ENCODE measurements at regions of chr5 and their contacts with region 1.

Region 1: DNA sequence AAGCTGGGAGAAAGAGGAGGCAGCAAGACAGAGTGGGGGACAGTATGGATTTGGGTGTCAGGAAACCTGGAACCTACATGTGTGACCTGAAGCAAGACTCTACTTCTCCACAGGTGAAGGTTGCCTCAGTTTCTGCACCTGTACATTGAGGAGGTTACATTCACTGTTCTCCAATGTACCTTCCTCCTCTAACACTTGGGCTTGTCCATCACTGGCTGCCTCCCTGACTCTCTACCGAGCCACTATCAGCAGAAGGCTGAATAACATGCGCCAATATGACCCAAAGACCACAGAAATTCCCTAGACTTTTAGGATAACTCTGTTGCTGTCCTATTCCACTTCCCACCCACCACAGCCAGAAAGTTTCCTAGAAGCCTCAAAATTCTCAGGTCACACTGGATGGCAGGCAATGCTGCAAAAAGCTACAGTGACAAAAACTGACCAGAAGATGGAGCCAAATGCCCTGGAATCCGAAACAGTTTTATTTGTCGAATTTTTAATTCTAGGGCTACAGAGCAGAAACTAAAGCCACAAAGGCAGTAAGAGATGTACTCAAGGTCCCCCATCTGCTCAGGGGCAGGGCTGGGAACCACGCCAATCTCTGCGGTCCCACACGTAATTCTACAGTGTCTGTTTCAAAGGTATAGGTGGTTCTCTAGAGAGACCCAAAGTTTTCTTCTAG is 64.4 kb downstream of the FAM114A2 start:
- DNase-seq: no peak
- H3K4me3 Mint-ChIP-seq: no peak overlapping the region
- H3K27ac Mint-ChIP-seq: no peak overlapping the region
- H3K4me1 Mint-ChIP-seq: no peaks in the 10 kb centered on the region
- H3K27me3 Mint-ChIP-seq: peaks cover 15% of the 10 kb centered on the region

Region 2: GRCh38 chr5:154038707-154039457 is 64.6 kb after region 1 on chr5 and contains the starts of genes FAM114A2 and MFAP3:
- intact Hi-C with region 1: loop called (anchors 2 kb)
- DNase-seq: peak; percentile 88
- H3K4me3 Mint-ChIP-seq: peak within 1 kb of the TSS; percentile 98
- H3K27ac Mint-ChIP-seq: peak within 1 kb of the TSS; percentile 94
- H3K4me1 Mint-ChIP-seq: peaks cover 50% of the 10 kb centered on the region
- H3K27me3 Mint-ChIP-seq: no peaks in the 10 kb centered on the region
- total RNA-seq, gene FAM114A2: 28.3 and 28.7 TPM in 2 replicates
- total RNA-seq, gene MFAP3: 24.3 and 29.9 TPM in 2 replicates

Region 3: GRCh38 chr5:154179846-154180710 is 205.8 kb after region 1 on chr5:
- intact Hi-C with region 1: loop called (anchors 1 kb)
- DNase-seq: peak; percentile 25
- H3K4me3 Mint-ChIP-seq: no peak overlapping the region
- H3K27ac Mint-ChIP-seq: no peak overlapping the region
- H3K4me1 Mint-ChIP-seq: peaks cover 38% of the 10 kb centered on the region
- H3K27me3 Mint-ChIP-seq: peaks cover 8% of the 10 kb centered on the region

Region 4: DNA sequence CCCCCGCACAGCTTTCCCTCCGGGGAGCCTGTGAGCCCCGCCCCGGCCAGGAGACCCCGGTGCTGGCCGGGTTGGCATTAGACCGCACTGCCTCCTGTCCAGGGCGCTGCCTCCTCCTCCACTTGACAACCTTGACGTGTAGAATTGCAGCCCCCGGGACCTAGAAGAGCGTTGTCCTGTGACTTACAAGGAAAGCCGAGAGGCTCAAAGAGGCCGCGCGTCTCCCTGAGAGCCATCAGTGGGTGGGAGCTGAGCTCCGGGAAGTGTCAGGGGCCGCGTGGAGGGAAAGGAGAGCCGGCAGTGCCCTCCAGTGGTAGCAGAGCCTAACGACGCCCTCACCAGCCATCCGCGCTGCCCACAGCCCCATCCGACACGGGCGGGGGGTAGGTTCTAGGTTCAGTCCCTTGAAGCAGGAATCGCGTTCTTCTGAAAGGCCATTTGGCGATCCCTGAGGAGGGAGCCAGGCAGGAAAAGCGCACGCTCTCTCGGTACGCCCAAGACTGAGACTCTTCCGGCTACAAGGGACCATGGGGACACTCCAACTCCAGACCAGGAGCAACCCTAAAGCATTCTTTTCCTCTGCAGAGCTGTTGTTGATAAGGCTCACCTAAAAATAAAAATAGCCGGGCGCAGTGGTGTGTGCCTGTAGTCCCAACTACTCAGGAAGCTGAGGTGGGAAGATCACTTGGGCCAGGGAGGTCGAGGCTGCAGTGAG is 431.0 kb after region 1 on chr5:
- intact Hi-C with region 1: loop called (anchors 1 kb)
- DNase-seq: peak; percentile 50
- H3K4me3 Mint-ChIP-seq: peak overlapping the region; percentile 26
- H3K27ac Mint-ChIP-seq: peak overlapping the region; percentile 40
- H3K4me1 Mint-ChIP-seq: peaks cover 7% of the 10 kb centered on the region
- H3K27me3 Mint-ChIP-seq: no peaks in the 10 kb centered on the region

Region 5: GRCh38 chr5:154467655-154468354 is 493.5 kb after region 1 on chr5:
- intact Hi-C with region 1: loop called (anchors 1 kb)
- DNase-seq: peak; percentile 54
- H3K4me3 Mint-ChIP-seq: no peak overlapping the region
- H3K27ac Mint-ChIP-seq: peak overlapping the region; percentile 48
- H3K4me1 Mint-ChIP-seq: no peaks in the 10 kb centered on the region
- H3K27me3 Mint-ChIP-seq: peaks cover 49% of the 10 kb centered on the region

Region 6: DNA sequence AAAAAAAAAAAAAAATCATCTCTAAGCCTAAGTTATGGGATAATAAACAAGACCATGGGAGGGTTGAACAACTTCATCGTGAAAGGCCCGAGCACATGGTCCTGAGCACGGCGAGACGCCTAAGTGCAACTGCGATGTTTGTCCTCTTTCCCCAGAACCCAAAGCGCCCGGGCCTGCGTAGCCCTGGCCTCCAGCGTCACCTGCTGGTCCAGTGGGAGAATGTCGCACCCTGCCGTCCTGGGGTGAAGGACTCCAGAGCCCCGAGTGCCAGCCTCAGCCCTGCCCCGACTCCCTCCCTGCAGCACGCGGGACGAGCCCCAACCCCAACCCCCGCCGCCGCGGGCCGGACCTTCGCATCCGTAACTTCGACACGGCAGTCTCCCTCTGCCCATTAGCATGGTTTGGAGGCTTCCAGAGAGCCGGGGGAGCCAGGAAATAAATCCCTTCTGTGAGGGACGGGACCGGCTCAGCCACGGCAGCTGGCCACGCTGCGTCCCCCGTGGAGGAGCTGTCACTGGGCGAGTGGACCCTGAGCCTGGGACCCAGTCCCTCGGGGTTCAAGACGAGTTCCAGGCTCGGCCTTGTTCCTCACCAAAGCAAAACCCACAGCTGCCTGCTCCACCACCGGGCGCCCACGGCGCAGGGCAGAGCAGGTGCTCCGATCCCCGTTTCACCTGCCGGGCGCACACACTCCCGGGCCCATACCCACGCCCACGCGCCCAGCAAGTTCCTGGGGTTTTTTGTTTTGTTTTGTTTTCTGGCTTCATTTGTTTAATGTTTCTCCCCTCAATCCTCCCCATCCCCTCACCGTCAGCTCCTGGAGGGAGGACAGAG is 636.3 kb after region 1 on chr5:
- intact Hi-C with region 1: loop called (anchors 1 kb)
- DNase-seq: peak; percentile 47
- H3K4me3 Mint-ChIP-seq: no peak overlapping the region
- H3K27ac Mint-ChIP-seq: no peak overlapping the region
- H3K4me1 Mint-ChIP-seq: no peaks in the 10 kb centered on the region
- H3K27me3 Mint-ChIP-seq: peaks cover 44% of the 10 kb centered on the region